Esophagus muscularis mucosa (tissue), 4 donors: ENCODE measurements at regions of chr2 and their contacts with region 1.

Region 1: DNA sequence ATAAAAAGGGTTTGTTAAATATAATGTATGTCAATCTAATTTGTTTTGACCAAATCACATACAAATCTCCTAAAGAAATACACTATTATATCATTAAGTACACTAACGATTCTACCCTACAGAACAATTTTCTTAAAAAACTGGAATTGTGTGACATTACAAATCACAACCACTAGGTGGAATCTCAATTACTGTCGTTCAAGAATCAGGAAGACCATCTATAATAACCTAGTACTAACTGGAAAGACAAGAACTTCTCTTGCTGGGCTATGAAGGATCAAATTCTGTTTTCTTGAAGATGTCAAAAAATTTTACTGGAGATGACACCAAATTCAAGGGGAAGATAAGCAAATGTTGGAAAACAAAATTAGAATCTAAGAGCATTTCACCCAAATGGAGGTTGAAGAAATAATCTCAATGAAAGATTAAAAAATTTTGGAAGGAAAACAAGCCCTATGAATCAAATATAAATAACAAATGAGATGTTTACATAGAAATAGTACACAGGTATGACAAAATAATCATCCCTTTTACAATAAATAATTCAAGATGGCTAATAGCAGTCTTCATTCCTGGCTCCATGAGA is 110.9 kb downstream of the STK39 start:
- DNase-seq: no peak
- H3K4me3 ChIP-seq: no peak overlapping the region
- H3K27ac ChIP-seq: no peak overlapping the region
- H3K4me1 ChIP-seq: peaks cover 0 to 5% (median 2%) of the 10 kb centered on the region in 4 donors
- H3K27me3 ChIP-seq: no peaks in the 10 kb centered on the region
- CTCF ChIP-seq: peak; percentile 52 to 62 (median 55)
- EP300 ChIP-seq: no peak
- POLR2A ChIP-seq: no peak

Region 2: DNA sequence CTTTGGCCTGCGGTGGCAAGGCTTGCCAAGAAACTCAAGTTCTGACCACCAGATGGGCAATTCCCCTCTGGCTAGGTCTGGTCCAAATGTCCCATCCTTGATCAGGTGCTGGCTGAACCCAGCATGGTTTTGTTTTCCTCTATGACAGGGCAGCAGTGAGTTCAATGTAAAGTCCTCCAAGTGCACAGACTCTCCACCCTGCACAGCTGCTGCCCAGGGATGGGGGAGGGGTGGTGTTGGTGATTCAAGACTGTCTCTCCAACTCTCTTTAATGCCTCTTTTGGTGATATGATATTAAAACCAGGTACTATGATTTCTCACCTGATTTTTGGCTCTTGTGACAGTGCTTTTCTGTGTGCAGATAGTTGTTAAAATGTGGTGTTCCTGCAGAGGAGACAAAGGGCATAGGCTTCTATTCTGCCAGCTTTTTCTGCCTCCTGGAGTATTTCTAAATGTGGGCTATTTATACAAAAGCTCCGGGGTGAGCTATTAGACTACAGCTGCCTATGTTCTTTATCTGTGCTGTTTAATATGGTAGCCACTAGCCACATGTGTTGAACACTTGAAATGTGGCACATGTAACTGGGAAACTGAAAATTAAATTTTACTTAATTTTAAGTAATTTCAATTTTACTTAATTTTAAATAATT is 174.9 kb after region 1 on chr2:
- intact Hi-C with region 1: loop called (anchors 10 kb)
- DNase-seq: no peak
- H3K4me3 ChIP-seq: no peak overlapping the region
- H3K27ac ChIP-seq: peak overlapping the region in 3 of 4 donors; percentile 54 to 69 (median 64)
- H3K4me1 ChIP-seq: peaks cover 25 to 49% (median 46%) of the 10 kb centered on the region in 4 donors
- H3K27me3 ChIP-seq: no peaks in the 10 kb centered on the region
- CTCF ChIP-seq: no peak
- EP300 ChIP-seq: no peak
- POLR2A ChIP-seq: no peak